ENCODE measurements at regions of chr13 and their contacts with region 1.

Region 1: GRCh38 chr13:78121459-78122348 is 203.1 kb upstream of the EDNRB start:
- DNase-seq: no peak
- ATAC-seq: no peak
- H3K4me3 Mint-ChIP-seq: no peak overlapping the region
- H3K27ac Mint-ChIP-seq: no peak overlapping the region
- H3K4me1 Mint-ChIP-seq: no peaks in the 10 kb centered on the region
- H3K27me3 Mint-ChIP-seq: peaks cover 16% of the 10 kb centered on the region
- CTCF ChIP-seq: peak; percentile 78

Region 2: DNA sequence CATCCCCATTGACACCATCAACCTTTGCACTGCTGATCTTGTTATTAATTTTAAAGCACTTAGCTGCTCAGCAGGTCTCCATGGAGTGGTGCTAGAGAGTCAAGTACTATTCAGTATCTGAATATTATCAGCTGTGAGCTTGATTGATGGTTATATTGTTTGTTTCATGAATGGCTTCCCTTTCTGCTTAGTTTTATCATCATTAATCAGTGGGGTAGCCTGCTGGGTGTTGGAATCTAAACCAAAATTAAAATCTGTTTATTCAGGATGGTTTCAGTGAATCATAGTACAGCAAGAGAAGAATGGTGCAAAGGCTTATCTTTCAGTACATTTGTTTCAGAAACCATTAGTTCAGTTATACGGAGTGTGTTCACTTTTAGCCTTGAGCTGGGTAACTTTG is 628.7 kb before region 1 on chr13:
- CTCF ChIA-PET with region 1: interaction called, 3 read pairs
- POLR2A ChIA-PET with region 1: no interaction called
- intact Hi-C with region 1: loop called (anchors 2 kb)
- DNase-seq: no peak
- ATAC-seq: peak; percentile 79
- H3K4me3 Mint-ChIP-seq: no peak overlapping the region
- H3K27ac Mint-ChIP-seq: no peak overlapping the region
- H3K4me1 Mint-ChIP-seq: no peaks in the 10 kb centered on the region
- H3K27me3 Mint-ChIP-seq: peaks cover 3% of the 10 kb centered on the region
- CTCF ChIP-seq: no peak

Region 3: DNA sequence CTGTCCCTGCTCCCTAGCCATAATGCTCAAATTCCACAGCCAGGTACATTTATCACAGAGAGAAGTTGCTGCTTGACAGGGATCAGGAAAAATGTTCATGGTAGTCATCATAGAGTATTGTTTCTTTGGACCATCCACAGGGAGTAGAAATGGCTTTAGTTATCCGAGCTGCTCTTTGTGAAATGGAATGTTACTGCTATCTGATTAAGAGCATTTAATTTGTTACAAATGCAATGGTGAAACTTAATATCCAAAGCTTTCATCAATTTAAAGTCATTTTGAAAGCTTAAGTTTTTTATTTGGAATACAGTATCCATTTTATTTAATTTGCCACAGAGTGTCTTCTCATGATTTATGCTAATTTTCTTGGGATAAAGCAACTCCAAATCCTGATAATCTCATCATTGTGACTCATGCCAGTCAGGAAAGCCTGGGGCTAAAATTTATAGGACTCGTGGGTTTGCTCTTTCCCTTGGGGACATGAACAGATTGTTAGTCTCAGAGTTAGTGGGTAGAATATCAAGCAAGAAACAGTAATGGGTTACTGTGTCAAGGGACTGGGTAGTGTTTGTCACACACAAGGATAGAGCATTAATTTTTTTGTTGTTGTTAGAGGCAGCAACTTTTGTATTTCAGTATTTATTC is 526.4 kb before region 1 on chr13:
- CTCF ChIA-PET with region 1: interaction called, 5 read pairs
- POLR2A ChIA-PET with region 1: no interaction called
- intact Hi-C with region 1: loop called (anchors 2 kb)
- DNase-seq: no peak
- ATAC-seq: no peak
- H3K4me3 Mint-ChIP-seq: no peak overlapping the region
- H3K27ac Mint-ChIP-seq: no peak overlapping the region
- H3K4me1 Mint-ChIP-seq: no peaks in the 10 kb centered on the region
- H3K27me3 Mint-ChIP-seq: peaks cover 13% of the 10 kb centered on the region
- CTCF ChIP-seq: no peak

Region 4: GRCh38 chr13:77740931-77741596 is 380.6 kb before region 1 on chr13:
- CTCF ChIA-PET with region 1: no interaction called
- POLR2A ChIA-PET with region 1: no interaction called
- intact Hi-C with region 1: no loop called
- DNase-seq: no peak
- ATAC-seq: no peak
- H3K4me3 Mint-ChIP-seq: no peak overlapping the region
- H3K27ac Mint-ChIP-seq: no peak overlapping the region
- H3K4me1 Mint-ChIP-seq: no peaks in the 10 kb centered on the region
- H3K27me3 Mint-ChIP-seq: no peaks in the 10 kb centered on the region
- CTCF ChIP-seq: no peak

Region 5: DNA sequence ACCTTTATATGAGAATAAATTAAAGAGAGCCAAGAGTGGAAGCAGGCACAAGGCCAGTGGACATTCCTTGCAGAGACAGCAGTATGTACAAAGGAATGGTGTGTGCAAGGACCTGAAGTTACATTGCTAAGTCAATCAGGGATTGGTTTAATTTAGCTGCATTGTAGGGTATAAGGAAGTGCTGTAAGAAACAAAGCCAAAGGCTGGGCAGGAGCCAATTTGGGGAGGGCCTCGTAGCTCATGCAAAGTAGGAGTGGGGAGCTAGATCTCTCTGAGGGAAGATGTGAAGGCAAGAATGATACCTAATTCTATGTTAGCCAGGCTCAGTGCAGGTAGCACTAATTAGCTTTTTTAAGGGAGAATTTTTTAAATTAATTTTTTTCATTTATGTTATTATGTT is 347.5 kb before region 1 on chr13:
- CTCF ChIA-PET with region 1: interaction called, 28 read pairs
- POLR2A ChIA-PET with region 1: no interaction called
- intact Hi-C with region 1: loop called (anchors 1 kb)
- DNase-seq: no peak
- ATAC-seq: no peak
- H3K4me3 Mint-ChIP-seq: no peak overlapping the region
- H3K27ac Mint-ChIP-seq: no peak overlapping the region
- H3K4me1 Mint-ChIP-seq: no peaks in the 10 kb centered on the region
- H3K27me3 Mint-ChIP-seq: no peaks in the 10 kb centered on the region
- CTCF ChIP-seq: no peak

Region 6: GRCh38 chr13:77779552-77780272 is 342.0 kb before region 1 on chr13:
- CTCF ChIA-PET with region 1: interaction called, 58 read pairs
- POLR2A ChIA-PET with region 1: no interaction called
- intact Hi-C with region 1: loop called (anchors 1 kb)
- DNase-seq: no peak
- ATAC-seq: peak; percentile 60
- H3K4me3 Mint-ChIP-seq: no peak overlapping the region
- H3K27ac Mint-ChIP-seq: no peak overlapping the region
- H3K4me1 Mint-ChIP-seq: peaks cover 6% of the 10 kb centered on the region
- H3K27me3 Mint-ChIP-seq: no peaks in the 10 kb centered on the region
- CTCF ChIP-seq: peak; percentile 37

Region 7: GRCh38 chr13:77907666-77908341 is 213.9 kb before region 1 on chr13:
- CTCF ChIA-PET with region 1: no interaction called
- POLR2A ChIA-PET with region 1: no interaction called
- intact Hi-C with region 1: loop called (anchors 10 kb)
- DNase-seq: no peak
- ATAC-seq: no peak
- H3K4me3 Mint-ChIP-seq: no peak overlapping the region
- H3K27ac Mint-ChIP-seq: no peak overlapping the region
- H3K4me1 Mint-ChIP-seq: no peaks in the 10 kb centered on the region
- H3K27me3 Mint-ChIP-seq: no peaks in the 10 kb centered on the region
- CTCF ChIP-seq: no peak

Region 8: DNA sequence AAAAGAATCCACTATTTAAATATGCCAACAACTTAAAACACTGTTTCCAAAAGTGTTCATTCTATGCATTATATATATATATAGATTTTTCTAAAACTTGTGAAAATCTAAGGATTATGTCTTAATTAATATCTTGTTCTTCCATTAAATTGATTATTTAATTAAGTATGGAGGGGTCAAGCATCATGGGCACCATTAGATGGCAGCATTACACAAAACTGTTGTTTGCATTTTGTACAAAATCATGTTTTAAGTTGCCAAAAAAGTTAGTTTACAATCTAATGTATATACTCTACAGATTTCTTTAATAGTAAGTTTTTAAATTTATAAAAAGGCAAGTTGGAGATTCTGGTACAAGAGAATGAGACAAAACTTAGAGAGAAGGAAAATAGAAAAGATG is 10.1 kb after region 1 on chr13:
- CTCF ChIA-PET with region 1: interaction called, 15 read pairs
- POLR2A ChIA-PET with region 1: no interaction called
- intact Hi-C with region 1: no loop called
- DNase-seq: no peak
- ATAC-seq: no peak
- H3K4me3 Mint-ChIP-seq: no peak overlapping the region
- H3K27ac Mint-ChIP-seq: no peak overlapping the region
- H3K4me1 Mint-ChIP-seq: no peaks in the 10 kb centered on the region
- H3K27me3 Mint-ChIP-seq: peaks cover 13% of the 10 kb centered on the region
- CTCF ChIP-seq: no peak

Region 9: GRCh38 chr13:79155883-79156282 is 1034.2 kb after region 1 on chr13:
- CTCF ChIA-PET with region 1: no interaction called
- POLR2A ChIA-PET with region 1: no interaction called
- intact Hi-C with region 1: no loop called
- DNase-seq: no peak
- ATAC-seq: no peak
- H3K4me3 Mint-ChIP-seq: no peak overlapping the region
- H3K27ac Mint-ChIP-seq: no peak overlapping the region
- H3K4me1 Mint-ChIP-seq: peaks cover 3% of the 10 kb centered on the region
- H3K27me3 Mint-ChIP-seq: peaks cover 4% of the 10 kb centered on the region
- CTCF ChIP-seq: no peak

Measured in activated B cell treated with CpG ODN at 0.5 μM for 24 hours (primary cell).